ENCODE measurements at regions of chr1 and their contacts with region 1.

Region 1: DNA sequence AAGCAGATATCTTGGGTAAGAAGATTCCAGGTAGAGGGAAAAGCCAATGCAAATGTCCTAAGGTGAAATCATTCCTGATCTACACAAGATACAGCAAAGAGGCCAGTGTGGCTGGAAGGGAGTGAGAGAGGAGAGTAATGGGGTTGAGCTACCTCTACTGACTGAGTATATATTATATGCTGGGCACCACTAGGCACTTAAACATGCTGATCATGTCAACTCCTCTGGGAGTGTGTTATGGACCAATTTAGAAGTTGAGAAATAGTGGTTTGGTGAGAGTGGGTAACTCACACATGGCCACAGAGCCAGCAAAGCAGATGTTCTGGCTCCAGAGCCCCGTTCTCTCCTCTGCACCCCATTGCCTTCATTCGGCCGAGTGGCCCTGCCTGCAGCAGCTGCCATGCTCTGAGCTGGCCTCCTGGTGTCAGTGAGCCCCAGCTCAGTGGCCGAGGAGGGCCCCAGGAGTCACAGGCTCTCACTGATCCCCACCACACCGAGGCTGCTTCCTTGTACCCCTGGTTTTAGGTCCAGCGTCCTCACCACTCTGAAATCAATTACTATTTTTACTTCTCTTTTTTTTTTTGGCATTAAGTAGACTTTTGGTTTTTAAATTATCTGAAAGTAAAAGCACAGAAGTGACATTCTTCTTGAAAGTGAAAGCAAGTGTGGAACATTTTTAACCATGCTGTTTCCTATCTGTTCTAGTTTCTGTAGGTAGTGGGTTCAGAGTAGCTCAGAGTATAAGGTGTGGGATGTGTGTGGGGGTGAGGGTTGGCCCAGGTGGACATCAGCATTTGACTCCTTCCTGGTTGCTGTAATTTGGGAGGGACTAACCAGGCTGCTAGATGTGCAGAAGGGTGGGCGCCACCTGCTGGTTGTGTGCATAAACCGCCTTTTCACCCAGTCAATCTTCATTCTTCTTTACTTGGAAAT is 45.8 kb upstream of the CRNN start:
- DNase-seq: peak; percentile 81
- CTCF ChIP-seq: peak; percentile 71

Region 2: GRCh38 chr1:152047730-152048402 is 412.0 kb before region 1 on chr1:
- CTCF ChIA-PET with region 1: interaction called, 47 read pairs
- POLR2A ChIA-PET with region 1: no interaction called
- DNase-seq: peak; percentile 87
- CTCF ChIP-seq: peak; percentile 65

Region 3: GRCh38 chr1:152189657-152190442 is 270.0 kb before region 1 on chr1:
- CTCF ChIA-PET with region 1: interaction called, 159 read pairs
- POLR2A ChIA-PET with region 1: no interaction called
- DNase-seq: peak; percentile 65
- CTCF ChIP-seq: peak; percentile 71

Region 4: DNA sequence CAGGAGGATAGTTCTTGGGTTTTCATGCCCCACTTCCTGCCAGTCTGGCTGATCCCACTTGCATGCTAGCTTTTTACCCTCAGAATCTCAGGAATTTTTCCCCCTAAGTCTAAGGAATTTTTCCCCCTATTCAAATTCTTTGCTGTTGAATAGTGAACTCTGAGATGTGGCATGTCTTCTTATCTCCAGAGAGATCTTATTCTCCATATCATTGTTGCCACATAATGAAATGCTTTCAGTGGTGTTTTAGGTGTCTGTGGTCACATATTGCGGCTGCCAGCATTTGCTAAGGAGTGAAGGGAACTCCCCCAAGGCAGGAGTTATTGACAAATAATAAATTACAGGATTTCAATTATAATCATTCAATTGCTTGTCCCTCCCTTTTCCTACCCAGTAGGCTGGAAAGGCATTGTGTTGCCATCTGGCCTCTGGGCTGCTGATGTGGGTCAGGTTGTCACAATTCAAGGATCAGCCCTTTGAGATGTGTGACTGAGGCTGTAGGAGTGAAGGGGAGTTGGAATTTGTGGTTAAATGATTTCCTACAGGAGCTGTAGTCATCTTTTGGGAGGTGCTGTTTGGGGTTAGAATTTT is 131.0 kb before region 1 on chr1:
- CTCF ChIA-PET with region 1: no interaction called
- POLR2A ChIA-PET with region 1: no interaction called
- DNase-seq: no peak
- CTCF ChIP-seq: no peak

Region 5: GRCh38 chr1:152398812-152399698 is 60.8 kb before region 1 on chr1:
- CTCF ChIA-PET with region 1: interaction called, 24 read pairs
- POLR2A ChIA-PET with region 1: no interaction called
- DNase-seq: peak; percentile 23
- CTCF ChIP-seq: peak; percentile 0

Region 6: GRCh38 chr1:152473887-152474537 is 14.2 kb after region 1 on chr1:
- CTCF ChIA-PET with region 1: interaction called, 19 read pairs
- POLR2A ChIA-PET with region 1: no interaction called
- DNase-seq: no peak
- CTCF ChIP-seq: no peak

Region 7: GRCh38 chr1:152582647-152583046 is 122.8 kb after region 1 on chr1:
- CTCF ChIA-PET with region 1: no interaction called
- POLR2A ChIA-PET with region 1: no interaction called
- DNase-seq: no peak
- CTCF ChIP-seq: no peak